A673 (cell line): ENCODE measurements at regions of chr12 and their contacts with region 1.

Region 1: DNA sequence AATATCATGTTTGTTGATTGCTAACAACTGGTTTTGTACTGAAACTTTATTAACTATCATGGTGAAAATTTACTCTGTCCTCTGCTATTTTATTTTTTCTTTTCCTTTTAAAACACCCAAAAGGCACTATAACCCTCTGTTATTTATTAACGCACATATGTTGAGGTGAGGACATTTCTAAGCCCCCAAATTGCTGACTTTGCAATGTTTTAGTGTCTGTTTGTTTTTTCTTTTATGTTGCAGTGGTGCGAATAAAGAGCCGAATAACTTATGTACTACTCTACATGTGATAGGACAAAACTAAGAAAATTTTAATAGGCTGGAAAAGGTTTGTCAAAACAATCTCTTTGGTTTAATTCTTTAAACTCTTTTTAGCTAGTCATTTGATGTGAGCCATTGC is 24.5 kb upstream of the PAWR start:
- DNase-seq: no peak
- H3K4me3 ChIP-seq: no peak overlapping the region
- H3K27ac ChIP-seq: no peak overlapping the region
- H3K4me1 ChIP-seq: no peaks in the 10 kb centered on the region
- H3K27me3 ChIP-seq: no peaks in the 10 kb centered on the region
- CTCF ChIP-seq: no peak

Region 2: DNA sequence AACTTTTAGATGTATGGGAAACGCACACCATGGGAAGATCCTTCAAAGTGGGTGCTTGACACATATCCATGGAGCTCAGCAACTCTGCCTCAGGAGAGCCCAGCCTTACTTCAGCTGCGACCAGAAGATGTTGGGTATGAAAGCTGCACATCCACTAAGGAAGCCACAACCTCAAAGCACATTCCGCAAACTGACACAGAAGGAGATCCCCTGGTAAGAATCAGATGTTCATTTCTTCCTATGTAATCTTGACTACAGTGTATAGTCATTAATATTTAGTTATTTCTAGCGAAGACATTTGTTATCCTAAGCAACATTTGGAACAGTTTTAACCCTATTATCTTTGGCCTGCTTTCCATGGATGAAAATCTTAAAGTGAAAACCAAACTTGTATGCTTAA is 1510.4 kb before region 1 on chr12:
- CTCF ChIA-PET with region 1: interaction called, 13 read pairs
- POLR2A ChIA-PET with region 1: no interaction called
- intact Hi-C with region 1: no loop called
- DNase-seq: no peak
- H3K4me3 ChIP-seq: no peak overlapping the region
- H3K27ac ChIP-seq: no peak overlapping the region
- H3K4me1 ChIP-seq: no peaks in the 10 kb centered on the region
- H3K27me3 ChIP-seq: no peaks in the 10 kb centered on the region
- CTCF ChIP-seq: no peak

Region 3: DNA sequence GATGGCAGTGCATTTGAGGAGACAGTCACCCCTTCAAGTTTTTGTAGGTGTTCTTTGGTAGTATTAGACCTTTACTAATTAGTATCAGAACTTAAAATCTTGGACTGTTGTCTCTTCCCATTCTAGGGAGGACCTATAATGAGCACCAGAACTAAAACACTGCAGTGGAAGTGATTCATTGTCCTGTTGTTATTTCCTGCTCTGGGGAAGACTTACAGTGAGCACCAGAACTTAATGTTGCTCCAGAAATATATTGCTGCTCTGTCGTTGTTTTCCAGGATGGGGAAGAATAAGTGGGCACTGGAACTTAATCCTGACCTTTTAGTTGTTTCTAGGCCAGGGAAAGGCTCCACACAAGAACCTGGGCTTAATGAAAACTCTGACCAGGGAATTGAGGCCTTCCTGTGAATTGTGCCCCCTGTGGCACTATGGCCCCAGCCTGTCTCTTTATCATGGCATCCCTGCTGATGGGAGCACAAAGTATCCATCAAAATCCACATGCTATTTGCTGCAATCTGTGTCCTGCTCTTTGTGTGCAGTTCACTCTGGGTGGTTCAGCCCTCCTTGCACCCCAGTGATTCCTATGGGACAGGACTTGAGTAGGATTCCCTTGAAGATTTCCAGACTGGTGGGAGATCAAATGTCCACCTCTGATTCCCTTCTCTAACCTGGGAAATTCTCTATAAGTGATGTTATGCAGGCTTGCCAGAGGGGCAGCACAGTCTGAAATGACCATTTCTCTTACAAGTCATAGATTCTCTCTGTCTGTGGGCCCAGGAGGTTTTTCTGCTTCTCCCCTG is 200.4 kb before region 1 on chr12:
- CTCF ChIA-PET with region 1: no interaction called
- POLR2A ChIA-PET with region 1: no interaction called
- intact Hi-C with region 1: no loop called
- DNase-seq: no peak
- H3K4me3 ChIP-seq: no peak overlapping the region
- H3K27ac ChIP-seq: no peak overlapping the region
- H3K4me1 ChIP-seq: no peaks in the 10 kb centered on the region
- H3K27me3 ChIP-seq: no peaks in the 10 kb centered on the region
- CTCF ChIP-seq: no peak